ENCODE measurements at regions of chr2 and their contacts with region 1.

Region 1: GRCh38 chr2:156400706-156401678 is 35.2 kb upstream of the GPD2 start:
- DNase-seq: peak; percentile 66 to 91 (median 89)
- ATAC-seq: peak; percentile 86
- H3K4me3 ChIP-seq: peak overlapping the region; percentile 100
- H3K4me3 Mint-ChIP-seq: peak overlapping the region; percentile 86 to 96 (median 90)
- H3K27ac ChIP-seq: peak overlapping the region; percentile 95
- H3K27ac Mint-ChIP-seq: peak overlapping the region; percentile 92 to 99 (median 95)
- H3K4me1 ChIP-seq: peaks cover 5 to 6% of the 10 kb centered on the region in 2 donors
- H3K4me1 Mint-ChIP-seq: peaks cover 16 to 39% (median 23%) of the 10 kb centered on the region in 7 donors
- H3K27me3 ChIP-seq: no peaks in the 10 kb centered on the region
- H3K27me3 Mint-ChIP-seq: peaks cover 0 to 6% (median 0%) of the 10 kb centered on the region in 5 donors

Region 2: GRCh38 chr2:156253765-156254164 is 147.2 kb before region 1 on chr2:
- CTCF ChIA-PET with region 1: no interaction called
- POLR2A ChIA-PET with region 1: no interaction called
- intact Hi-C with region 1: loop called in 1 of 2 experiments (anchors 1 kb)
- DNase-seq: no peak
- ATAC-seq: no peak
- H3K4me3 ChIP-seq: no peak overlapping the region
- H3K4me3 Mint-ChIP-seq: peak overlapping the region in 7 of 10 donors; percentile 42 to 83 (median 75)
- H3K27ac ChIP-seq: no peak overlapping the region
- H3K27ac Mint-ChIP-seq: peak overlapping the region in 2 of 9 donors; percentile 7 to 88
- H3K4me1 ChIP-seq: no peaks in the 10 kb centered on the region
- H3K4me1 Mint-ChIP-seq: peaks cover 0 to 6% (median 0%) of the 10 kb centered on the region in 7 donors
- H3K27me3 ChIP-seq: no peaks in the 10 kb centered on the region
- H3K27me3 Mint-ChIP-seq: peaks cover 0 to 16% (median 9%) of the 10 kb centered on the region in 5 donors

Region 3: DNA sequence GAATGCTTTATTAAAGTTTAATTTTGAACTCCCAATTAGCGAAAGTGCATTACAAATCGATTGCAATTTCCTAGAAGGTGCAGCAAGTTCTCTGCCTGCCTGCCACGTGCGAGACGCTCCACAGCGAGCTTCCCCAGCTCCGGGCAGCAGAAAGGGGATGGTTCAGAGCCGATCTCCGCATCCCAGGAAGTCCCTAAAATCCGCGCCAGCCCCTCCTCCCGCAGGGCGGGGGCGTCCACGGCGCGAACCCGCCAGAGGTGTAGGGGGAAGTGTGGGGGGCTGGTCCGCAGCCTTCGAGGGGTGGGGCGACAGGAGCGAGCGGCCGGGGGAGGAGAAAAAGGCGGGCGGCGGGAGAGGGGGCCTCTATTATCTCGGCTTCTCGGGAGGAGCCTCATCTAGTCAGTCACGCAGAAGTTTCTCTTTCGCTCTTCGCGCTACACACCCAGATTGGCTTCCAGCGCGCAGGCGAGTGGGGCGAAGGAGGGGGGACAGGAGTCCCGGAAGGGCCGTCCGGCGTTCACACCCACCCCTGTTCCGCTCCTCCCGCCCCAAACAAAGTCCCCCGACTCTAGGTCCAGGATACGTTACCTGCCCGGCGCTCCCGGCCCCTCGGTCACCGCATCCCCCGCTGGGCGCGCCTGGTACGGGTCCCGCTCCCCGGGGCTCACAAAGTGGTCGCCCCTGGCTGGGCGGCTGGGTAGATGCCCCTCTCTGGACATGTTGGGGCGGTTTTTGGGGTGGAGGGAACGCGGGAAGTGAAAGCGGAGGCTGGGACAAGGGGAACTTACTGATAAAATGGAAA is 59.3 kb before region 1 on chr2:
- CTCF ChIA-PET with region 1: interaction called, 6 read pairs
- POLR2A ChIA-PET with region 1: interaction called, 28 read pairs
- intact Hi-C with region 1: loop called (anchors 1 kb)
- DNase-seq: peak; percentile 66 to 91 (median 85)
- ATAC-seq: peak; percentile 81
- H3K4me3 ChIP-seq: peak overlapping the region; percentile 67
- H3K4me3 Mint-ChIP-seq: peak overlapping the region; percentile 91 to 98 (median 96)
- H3K27ac ChIP-seq: peak overlapping the region; percentile 100
- H3K27ac Mint-ChIP-seq: peak overlapping the region; percentile 94 to 100 (median 99)
- H3K4me1 ChIP-seq: peaks cover 18 to 20% of the 10 kb centered on the region in 2 donors
- H3K4me1 Mint-ChIP-seq: peaks cover 6 to 51% (median 45%) of the 10 kb centered on the region in 7 donors
- H3K27me3 ChIP-seq: no peaks in the 10 kb centered on the region
- H3K27me3 Mint-ChIP-seq: no peaks in the 10 kb centered on the region

Region 4: GRCh38 chr2:156346731-156347130 is 54.3 kb before region 1 on chr2:
- CTCF ChIA-PET with region 1: interaction called, 6 read pairs
- POLR2A ChIA-PET with region 1: interaction called, 28 read pairs
- intact Hi-C with region 1: loop called (anchors 1 kb)
- DNase-seq: no peak
- ATAC-seq: no peak
- H3K4me3 ChIP-seq: no peak overlapping the region
- H3K4me3 Mint-ChIP-seq: no peak overlapping the region
- H3K27ac ChIP-seq: no peak overlapping the region
- H3K27ac Mint-ChIP-seq: peak overlapping the region in 4 of 9 donors; percentile 3 to 34 (median 32)
- H3K4me1 ChIP-seq: peaks cover 6 to 9% of the 10 kb centered on the region in 2 donors
- H3K4me1 Mint-ChIP-seq: peaks cover 1 to 29% (median 21%) of the 10 kb centered on the region in 7 donors
- H3K27me3 ChIP-seq: no peaks in the 10 kb centered on the region
- H3K27me3 Mint-ChIP-seq: no peaks in the 10 kb centered on the region

Region 5: DNA sequence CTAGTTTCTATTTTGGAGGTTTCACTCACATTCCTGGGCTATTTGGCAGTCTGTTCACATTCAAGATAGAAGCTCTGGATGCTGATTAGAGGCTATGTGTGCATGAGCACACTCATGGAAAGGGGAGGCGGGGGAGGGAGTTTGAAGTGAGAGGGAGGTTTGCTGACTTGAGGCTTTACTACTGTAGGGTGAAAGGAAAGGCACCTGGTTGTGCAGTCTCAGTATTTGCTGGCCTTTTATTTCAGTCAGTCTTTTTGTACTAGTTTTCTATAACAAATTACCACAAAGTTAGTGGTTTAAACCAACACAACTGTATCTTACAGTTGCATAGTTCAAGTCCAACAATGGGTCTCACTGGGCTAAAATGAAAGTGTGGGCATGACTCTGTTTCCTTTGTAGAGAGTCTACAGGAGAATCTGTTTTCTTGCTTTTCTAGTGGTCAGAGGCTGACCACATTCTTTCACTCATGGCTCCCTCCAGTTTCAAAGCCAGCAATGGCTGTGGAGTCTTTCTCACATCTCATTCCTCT is 20.8 kb before region 1 on chr2:
- CTCF ChIA-PET with region 1: no interaction called
- POLR2A ChIA-PET with region 1: no interaction called
- intact Hi-C with region 1: loop called in 1 of 2 experiments (anchors 2 kb)
- DNase-seq: no peak
- ATAC-seq: no peak
- H3K4me3 ChIP-seq: no peak overlapping the region
- H3K4me3 Mint-ChIP-seq: no peak overlapping the region
- H3K27ac ChIP-seq: no peak overlapping the region
- H3K27ac Mint-ChIP-seq: no peak overlapping the region
- H3K4me1 ChIP-seq: no peaks in the 10 kb centered on the region
- H3K4me1 Mint-ChIP-seq: peaks cover 0 to 20% (median 0%) of the 10 kb centered on the region in 7 donors
- H3K27me3 ChIP-seq: no peaks in the 10 kb centered on the region
- H3K27me3 Mint-ChIP-seq: peaks cover 0 to 6% (median 0%) of the 10 kb centered on the region in 5 donors

Region 6: GRCh38 chr2:156435715-156436496 is 34.9 kb after region 1 on chr2 and contains the start of gene GPD2:
- CTCF ChIA-PET with region 1: interaction called, 4 read pairs
- POLR2A ChIA-PET with region 1: interaction called, 12 read pairs
- intact Hi-C with region 1: loop called (anchors 1 kb)
- DNase-seq: peak; percentile 37 to 71 (median 58)
- ATAC-seq: peak; percentile 74
- H3K4me3 ChIP-seq: peak within 1 kb of the TSS; percentile 72
- H3K4me3 Mint-ChIP-seq: peak within 1 kb of the TSS; percentile 87 to 100 (median 98)
- H3K27ac ChIP-seq: peak within 1 kb of the TSS; percentile 71
- H3K27ac Mint-ChIP-seq: peak within 1 kb of the TSS; percentile 93 to 98 (median 95)
- H3K4me1 ChIP-seq: peaks cover 16 to 18% of the 10 kb centered on the region in 2 donors
- H3K4me1 Mint-ChIP-seq: peaks cover 25 to 51% (median 38%) of the 10 kb centered on the region in 7 donors
- H3K27me3 ChIP-seq: no peaks in the 10 kb centered on the region
- H3K27me3 Mint-ChIP-seq: no peaks in the 10 kb centered on the region
- total RNA-seq, gene GPD2: 7.8 to 17.1 (median 11.6) TPM

Region 7: GRCh38 chr2:156476850-156477206 is 75.8 kb after region 1 on chr2:
- CTCF ChIA-PET with region 1: no interaction called
- POLR2A ChIA-PET with region 1: no interaction called
- intact Hi-C with region 1: loop called in 1 of 2 experiments (anchors 2 kb)
- DNase-seq: no peak
- ATAC-seq: no peak
- H3K4me3 ChIP-seq: no peak overlapping the region
- H3K4me3 Mint-ChIP-seq: peak overlapping the region in 1 of 10 donors; percentile 58
- H3K27ac ChIP-seq: no peak overlapping the region
- H3K27ac Mint-ChIP-seq: peak overlapping the region in 2 of 9 donors; percentile 24 to 85
- H3K4me1 ChIP-seq: peaks cover 0 to 16% of the 10 kb centered on the region in 2 donors
- H3K4me1 Mint-ChIP-seq: peaks cover 0 to 40% (median 7%) of the 10 kb centered on the region in 7 donors
- H3K27me3 ChIP-seq: no peaks in the 10 kb centered on the region
- H3K27me3 Mint-ChIP-seq: no peaks in the 10 kb centered on the region

Measured in naive thymus-derived CD4-positive, alpha-beta T cell (primary cell).